Body of pancreas (tissue), 4 donors: ENCODE measurements at regions of chr1 and their contacts with region 1.

Region 1: DNA sequence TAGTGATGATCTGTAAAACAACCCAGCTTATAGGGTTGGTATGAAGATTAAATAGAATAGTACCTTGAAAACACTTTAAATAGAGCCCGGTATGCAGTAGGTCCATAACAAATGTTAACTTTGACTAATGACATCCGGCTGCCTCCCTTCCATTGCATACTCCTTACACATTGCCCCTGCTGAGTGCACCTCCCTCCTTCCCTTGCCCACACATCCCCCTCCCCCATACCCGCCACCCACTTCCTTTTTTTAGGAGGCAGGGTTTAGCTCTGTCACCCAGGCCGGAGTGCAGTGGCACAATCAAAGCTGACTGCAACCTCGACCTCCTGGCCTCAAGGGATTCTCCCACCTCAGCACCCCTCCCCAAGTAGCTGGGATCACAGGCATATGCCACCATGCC is 24.4 kb upstream of the ZC3H12A start:
- DNase-seq: peak in 1 of 4 donors; percentile 21
- ATAC-seq: no peak
- H3K4me3 ChIP-seq: no peak overlapping the region
- H3K27ac ChIP-seq: no peak overlapping the region
- H3K4me1 ChIP-seq: peaks cover under 1% of the 10 kb centered on the region
- H3K27me3 ChIP-seq: peaks cover 0 to 4% of the 10 kb centered on the region in 2 donors
- CTCF ChIP-seq: no peak
- POLR2A ChIP-seq: no peak

Region 2: DNA sequence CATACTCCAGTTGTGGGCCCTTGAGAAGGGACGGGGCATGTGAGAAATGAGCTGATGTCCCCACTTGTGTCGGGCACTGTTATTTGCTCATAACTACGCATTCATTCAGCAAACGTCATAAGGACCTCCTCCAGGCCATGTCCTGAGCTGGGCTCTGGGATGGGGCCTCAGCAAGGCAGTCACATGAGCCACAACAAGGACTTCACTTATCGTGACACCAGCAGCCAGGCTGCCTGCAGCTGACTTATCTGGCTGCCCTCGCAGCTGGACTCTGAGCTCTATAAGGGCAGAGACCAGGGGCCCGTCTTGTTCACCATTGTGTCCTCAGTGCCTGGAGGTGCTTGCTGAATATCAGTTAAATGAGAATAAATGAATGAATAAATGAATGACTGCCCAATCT is 378.1 kb before region 1 on chr1:
- intact Hi-C with region 1: no loop called
- DNase-seq: no peak
- ATAC-seq: no peak
- H3K4me3 ChIP-seq: no peak overlapping the region
- H3K27ac ChIP-seq: no peak overlapping the region
- H3K4me1 ChIP-seq: no peaks in the 10 kb centered on the region
- H3K27me3 ChIP-seq: no peaks in the 10 kb centered on the region
- CTCF ChIP-seq: no peak
- POLR2A ChIP-seq: no peak

Region 3: GRCh38 chr1:37486680-37487618 is 37.0 kb after region 1 on chr1:
- intact Hi-C with region 1: loop called (anchors 5 kb)
- DNase-seq: peak; percentile 74 to 84 (median 79)
- ATAC-seq: peak; percentile 74
- H3K4me3 ChIP-seq: no peak overlapping the region
- H3K27ac ChIP-seq: peak overlapping the region in 3 of 4 donors; percentile 57 to 97 (median 76)
- H3K4me1 ChIP-seq: peaks cover 51% of the 10 kb centered on the region
- H3K27me3 ChIP-seq: no peaks in the 10 kb centered on the region
- CTCF ChIP-seq: peak; percentile 89 to 97 (median 96)
- POLR2A ChIP-seq: no peak

Region 4: DNA sequence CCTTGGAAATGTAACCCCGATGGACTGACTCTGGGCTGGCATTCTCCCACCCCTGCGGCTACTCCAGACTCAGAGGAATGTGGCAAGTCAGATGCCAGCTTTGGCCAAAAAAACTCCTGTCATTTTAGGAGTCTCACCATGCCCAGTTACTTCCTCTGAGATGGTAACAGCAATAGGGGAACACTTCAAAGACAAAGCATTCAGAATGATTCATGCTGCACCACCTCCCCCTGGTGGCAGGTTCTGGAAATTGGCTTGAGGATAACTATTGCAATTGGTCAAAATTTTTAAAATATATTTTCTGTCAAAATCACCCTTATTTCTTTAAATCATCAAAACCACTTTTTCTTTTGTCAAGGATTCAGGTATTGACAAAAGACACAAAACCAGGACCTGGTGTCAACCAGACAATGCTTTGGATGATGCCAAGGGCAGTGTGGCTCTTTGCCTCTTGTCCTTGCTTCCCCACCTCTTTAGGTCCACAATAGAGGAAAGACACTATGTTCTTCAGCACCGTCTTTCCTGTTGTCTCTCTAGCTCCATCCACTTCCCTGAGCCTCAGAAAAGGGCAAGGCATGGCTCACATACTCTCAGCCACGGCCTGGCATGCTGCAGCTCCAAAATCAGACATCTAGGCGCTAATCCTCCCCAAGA is 232.5 kb after region 1 on chr1:
- intact Hi-C with region 1: loop called (anchors 5 kb)
- DNase-seq: peak; percentile 59 to 78 (median 70)
- ATAC-seq: peak; percentile 77
- H3K4me3 ChIP-seq: no peak overlapping the region
- H3K27ac ChIP-seq: no peak overlapping the region
- H3K4me1 ChIP-seq: no peaks in the 10 kb centered on the region
- H3K27me3 ChIP-seq: no peaks in the 10 kb centered on the region
- CTCF ChIP-seq: peak; percentile 68 to 84 (median 76)
- POLR2A ChIP-seq: no peak